ENCODE measurements at regions of chr10 and their contacts with region 1.

Region 1: DNA sequence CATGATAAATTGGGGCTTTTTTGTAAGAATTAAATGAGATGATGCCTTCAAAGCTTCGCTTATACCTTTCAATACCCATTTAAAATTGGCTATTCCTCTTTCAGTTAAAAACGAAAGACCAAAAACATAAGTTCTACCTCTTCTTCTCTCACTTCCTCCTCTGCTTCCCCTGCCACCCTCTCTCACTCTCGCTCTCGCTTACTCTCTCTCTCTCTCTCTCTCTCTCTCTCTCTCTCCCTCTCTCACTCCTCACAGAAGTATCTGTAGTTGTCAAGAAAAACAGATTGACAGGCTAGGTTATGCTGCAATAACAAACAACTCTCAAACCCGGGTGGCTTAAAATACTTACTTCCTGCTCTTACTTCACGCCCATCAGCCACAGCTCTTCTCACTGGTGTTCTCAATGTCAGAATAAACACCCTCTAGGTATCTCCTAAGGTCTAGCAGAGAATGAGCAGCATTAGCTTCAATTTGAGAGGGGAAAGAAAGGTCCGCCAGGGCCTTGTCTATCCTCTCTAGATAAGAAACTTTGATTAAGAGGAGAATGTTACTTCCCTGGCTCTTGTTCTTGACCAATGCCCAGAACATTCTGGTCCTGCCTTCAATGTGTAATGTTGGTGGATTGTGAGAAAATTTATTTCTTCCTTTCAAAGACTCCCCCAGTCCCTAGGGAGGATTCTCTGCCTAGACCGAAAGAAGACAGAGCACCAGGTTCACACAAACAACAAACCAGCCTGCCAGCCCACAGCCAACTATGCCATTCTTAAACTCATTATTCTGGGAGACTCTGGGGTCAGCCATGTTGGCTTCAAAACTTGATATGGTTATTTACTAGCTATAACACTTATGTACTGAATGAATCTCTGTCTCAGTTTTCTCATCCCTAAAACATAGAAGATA is 1028.7 kb downstream of the XPNPEP1 start:
- DNase-seq: peak; percentile 24
- H3K4me3 ChIP-seq: no peak overlapping the region
- H3K27ac ChIP-seq: no peak overlapping the region
- H3K4me1 ChIP-seq: peaks cover 9% of the 10 kb centered on the region
- CTCF ChIP-seq: no peak

Region 2: DNA sequence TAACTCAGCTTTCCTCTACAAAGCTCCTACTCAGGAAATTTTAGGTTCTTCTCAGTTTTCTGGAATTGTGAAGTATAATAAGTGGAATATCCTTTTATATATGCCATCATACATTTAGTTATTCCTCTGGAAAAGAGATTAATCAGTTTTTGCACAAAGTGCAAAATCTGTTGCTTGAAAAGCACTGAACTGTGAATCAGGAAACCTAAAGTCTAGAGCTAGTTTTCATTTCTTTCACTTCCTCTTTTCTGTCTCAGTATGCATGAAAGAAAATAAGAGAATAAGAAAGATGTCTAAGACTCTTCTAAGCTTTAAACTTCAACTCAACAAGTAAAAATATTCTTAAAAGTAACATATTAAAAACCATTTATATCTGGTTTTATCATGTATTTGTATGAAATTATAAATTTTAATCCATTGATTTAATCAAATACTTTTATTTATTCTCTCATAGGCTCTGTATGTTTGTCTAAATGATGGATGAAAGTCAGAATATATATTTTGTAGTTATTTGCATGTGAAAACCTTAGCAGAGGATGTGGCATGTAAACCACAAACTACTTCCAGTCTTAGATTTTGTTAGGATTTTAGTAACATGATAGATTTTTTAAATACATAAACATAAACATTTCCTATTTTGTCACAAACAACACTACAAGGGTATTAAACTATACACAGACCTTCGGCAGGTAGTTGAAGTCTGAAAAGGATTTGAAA is 44.4 kb before region 1 on chr10:
- CTCF ChIA-PET with region 1: no interaction called
- POLR2A ChIA-PET with region 1: no interaction called
- intact Hi-C with region 1: loop called (anchors 5 kb)
- DNase-seq: peak; percentile 64
- H3K4me3 ChIP-seq: peak overlapping the region; percentile 22
- H3K27ac ChIP-seq: no peak overlapping the region
- H3K4me1 ChIP-seq: peaks cover 21% of the 10 kb centered on the region
- CTCF ChIP-seq: no peak

Region 3: DNA sequence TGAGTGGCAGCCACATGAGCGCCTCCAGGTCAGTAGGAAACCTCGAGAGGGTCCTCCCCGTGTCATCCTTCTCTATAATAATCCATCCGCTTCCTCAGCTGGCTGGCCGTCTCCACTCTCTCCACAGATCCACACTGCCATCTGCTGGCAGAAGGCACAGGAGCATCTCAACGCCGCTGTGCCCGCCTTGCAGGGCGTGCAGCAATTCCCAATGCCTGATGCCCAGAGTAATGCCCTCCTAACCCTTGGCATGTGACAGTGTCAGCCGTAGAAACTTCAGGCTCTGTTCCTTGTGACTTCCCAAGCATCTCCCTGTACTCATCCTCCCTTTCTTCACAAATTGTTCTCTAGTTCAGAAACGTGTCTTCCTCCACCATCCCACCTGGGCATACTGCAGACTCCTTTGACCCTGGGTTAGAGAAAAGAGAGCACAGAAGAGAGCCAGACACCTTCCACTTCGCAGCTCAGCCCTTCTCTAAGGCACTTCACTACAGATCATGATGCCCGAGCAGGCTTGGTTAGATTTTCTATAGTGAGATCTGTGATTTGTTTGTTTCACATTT is 957.9 kb after region 1 on chr10:
- CTCF ChIA-PET with region 1: no interaction called
- POLR2A ChIA-PET with region 1: no interaction called
- intact Hi-C with region 1: no loop called
- DNase-seq: peak; percentile 70
- H3K4me3 ChIP-seq: no peak overlapping the region
- H3K27ac ChIP-seq: no peak overlapping the region
- H3K4me1 ChIP-seq: no peaks in the 10 kb centered on the region
- CTCF ChIP-seq: peak; percentile 97